AG04449 (cell line): ENCODE measurements at regions of chr1 and their contacts with region 1.

Region 1: DNA sequence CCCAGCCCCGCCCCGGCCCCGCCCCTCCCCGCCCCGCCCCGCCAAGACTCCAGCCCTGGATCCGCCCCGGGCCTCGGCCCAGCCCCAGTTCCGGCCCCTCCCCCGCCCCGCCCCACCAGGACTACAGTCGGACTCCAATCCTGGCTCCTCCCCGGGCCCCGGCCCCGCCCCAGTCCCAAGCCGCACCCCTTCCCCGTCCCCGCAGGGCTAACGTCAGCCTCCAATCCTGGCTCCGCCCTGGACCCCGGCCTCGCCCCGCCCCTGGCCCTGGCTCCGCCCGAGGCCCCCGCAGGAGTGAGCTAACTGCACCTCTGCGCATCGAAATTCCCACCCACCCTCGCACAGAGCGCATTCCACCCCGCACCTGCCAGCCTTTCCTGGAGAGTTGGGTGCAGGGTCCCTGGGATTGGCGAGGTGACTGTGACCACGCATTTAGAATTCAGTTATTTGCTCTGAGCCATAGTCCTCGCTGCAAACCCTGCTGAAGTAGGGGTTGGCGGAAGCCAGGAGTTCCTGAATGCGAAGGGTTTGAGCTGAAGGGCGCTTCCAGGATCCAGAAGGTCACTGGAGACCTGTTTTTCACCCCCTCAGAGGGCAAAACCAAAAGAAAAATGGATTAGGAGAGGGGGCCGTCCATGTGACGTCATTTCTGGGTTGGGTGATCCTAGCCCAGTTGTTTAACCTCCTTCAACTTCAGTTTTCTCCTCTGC is 588 bp upstream of the IGSF8 start:
- DNase-seq: peak; percentile 29
- H3K4me3 ChIP-seq: peak overlapping the region; percentile 72
- CTCF ChIP-seq: no peak

Region 2: GRCh38 chr1:159936273-159936904 is 162.6 kb before region 1 on chr1:
- CTCF ChIA-PET with region 1: no interaction called
- POLR2A ChIA-PET with region 1: no interaction called
- DNase-seq: no peak
- H3K4me3 ChIP-seq: no peak overlapping the region
- CTCF ChIP-seq: peak; percentile 99

Region 3: GRCh38 chr1:160078512-160079195 is 20.4 kb before region 1 on chr1:
- CTCF ChIA-PET with region 1: interaction called, 32 read pairs
- POLR2A ChIA-PET with region 1: no interaction called
- DNase-seq: no peak
- H3K4me3 ChIP-seq: no peak overlapping the region
- CTCF ChIP-seq: peak; percentile 77

Region 4: DNA sequence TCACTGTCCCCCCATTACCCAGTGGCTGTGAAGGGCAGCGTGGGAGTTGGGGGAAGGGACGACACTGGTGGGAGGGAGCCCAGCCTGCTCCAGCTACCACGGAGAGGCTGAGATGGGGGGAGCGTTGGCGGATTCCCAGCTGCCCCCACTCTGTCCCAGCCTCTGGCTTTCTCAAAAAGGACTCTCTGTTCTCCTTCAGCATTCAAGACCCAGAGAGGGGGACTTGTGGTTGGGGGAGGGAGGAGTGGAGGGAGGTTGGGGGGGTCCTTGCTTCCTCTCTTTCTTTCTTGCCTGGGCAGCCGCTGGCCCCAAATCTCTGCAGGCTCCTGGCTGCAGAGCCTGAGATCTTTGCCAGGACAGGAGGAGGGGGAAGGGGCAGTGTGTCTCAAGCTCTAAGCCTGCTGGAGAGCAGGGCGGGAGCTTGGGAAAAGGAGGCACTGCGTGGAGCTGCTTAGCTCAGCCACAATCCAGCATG is 18.7 kb after region 1 on chr1:
- CTCF ChIA-PET with region 1: interaction called, 19 read pairs
- POLR2A ChIA-PET with region 1: no interaction called
- DNase-seq: no peak
- H3K4me3 ChIP-seq: no peak overlapping the region
- CTCF ChIP-seq: no peak

Region 5: GRCh38 chr1:160193091-160193819 is 94.2 kb after region 1 on chr1:
- CTCF ChIA-PET with region 1: interaction called, 76 read pairs
- POLR2A ChIA-PET with region 1: no interaction called
- DNase-seq: peak; percentile 33
- H3K4me3 ChIP-seq: no peak overlapping the region
- CTCF ChIP-seq: peak; percentile 99

Region 6: DNA sequence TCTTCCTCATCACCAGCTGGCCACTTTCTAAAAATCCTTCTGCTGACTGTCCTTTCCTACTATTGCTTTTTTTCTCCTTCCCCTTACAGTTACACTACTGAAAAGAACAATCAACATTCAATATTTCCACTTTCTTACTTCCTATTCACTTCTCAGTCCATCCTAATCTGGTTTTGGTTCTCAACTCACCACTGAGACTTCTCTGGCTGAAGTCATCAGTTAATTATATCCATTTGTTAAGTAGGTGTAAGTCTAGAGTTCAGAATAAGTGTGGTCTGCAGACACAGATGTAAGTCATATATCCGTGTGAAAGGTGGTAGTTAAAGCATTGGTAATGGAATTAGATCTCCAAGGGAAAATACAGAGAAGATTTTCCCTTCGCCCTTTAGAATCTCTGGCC is 127.6 kb after region 1 on chr1:
- CTCF ChIA-PET with region 1: interaction called, 206 read pairs
- POLR2A ChIA-PET with region 1: interaction called, 4 read pairs
- DNase-seq: no peak
- H3K4me3 ChIP-seq: no peak overlapping the region
- CTCF ChIP-seq: no peak

Region 7: DNA sequence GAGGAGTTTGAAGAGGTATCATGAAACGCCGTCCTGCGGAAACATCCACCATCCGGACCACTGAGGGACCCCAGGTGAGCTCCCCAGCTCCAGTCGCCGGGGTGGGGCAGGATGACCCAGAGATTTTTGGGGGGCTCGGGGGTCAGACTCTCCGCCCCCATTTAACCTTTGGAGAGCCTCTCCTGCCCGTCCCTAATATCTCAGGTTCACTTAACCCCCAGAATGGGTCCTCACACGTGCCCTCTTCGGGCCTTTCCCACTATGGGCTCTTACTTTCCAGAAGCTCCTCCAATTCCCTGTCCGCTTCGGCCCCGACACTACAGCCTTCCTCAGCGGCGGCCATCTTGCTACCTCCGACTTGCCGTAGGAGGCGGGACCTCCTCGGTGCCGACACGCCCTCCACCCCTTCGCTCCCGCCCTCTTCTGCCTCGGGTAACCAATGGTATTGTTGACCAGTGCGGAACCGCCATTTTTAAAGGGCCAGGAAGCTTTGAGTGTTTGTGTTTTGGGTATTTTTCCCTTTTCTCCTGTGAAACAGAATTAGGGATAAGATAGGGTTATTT is 185.9 kb after region 1 on chr1 and contains the start of gene PEX19:
- CTCF ChIA-PET with region 1: interaction called, 92 read pairs
- POLR2A ChIA-PET with region 1: no interaction called
- DNase-seq: no peak
- H3K4me3 ChIP-seq: peak within 1 kb of the TSS; percentile 81
- CTCF ChIP-seq: no peak